Kidney (tissue), 22 donors: ENCODE measurements at regions of chr2 and their contacts with region 1.

Region 1: DNA sequence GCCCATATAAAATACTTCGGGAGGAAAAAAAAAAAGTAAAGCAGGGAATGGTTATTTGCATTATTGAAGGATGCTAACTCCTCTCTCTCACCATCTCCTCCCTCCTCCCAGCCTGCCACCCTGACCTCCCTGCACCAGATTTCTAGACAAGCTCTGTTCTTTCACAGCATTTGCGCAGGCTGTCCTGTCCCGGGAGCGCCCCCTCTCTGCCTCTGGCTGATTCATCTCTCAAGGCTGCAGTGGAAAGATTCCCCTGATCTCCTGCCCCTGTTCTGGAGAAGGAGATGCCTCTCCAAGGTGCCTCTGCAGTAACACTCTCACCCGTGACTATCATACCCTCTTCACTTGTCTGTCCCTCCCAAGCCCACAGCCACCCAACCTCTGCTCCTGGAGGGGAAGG is 38.5 kb downstream of the COL4A4 start:
- DNase-seq: no peak
- H3K4me3 ChIP-seq: no peak overlapping the region
- H3K27ac ChIP-seq: no peak overlapping the region
- H3K4me1 ChIP-seq: no peaks in the 10 kb centered on the region
- H3K27me3 ChIP-seq: peaks cover 3% of the 10 kb centered on the region
- CTCF ChIP-seq: no peak

Region 2: DNA sequence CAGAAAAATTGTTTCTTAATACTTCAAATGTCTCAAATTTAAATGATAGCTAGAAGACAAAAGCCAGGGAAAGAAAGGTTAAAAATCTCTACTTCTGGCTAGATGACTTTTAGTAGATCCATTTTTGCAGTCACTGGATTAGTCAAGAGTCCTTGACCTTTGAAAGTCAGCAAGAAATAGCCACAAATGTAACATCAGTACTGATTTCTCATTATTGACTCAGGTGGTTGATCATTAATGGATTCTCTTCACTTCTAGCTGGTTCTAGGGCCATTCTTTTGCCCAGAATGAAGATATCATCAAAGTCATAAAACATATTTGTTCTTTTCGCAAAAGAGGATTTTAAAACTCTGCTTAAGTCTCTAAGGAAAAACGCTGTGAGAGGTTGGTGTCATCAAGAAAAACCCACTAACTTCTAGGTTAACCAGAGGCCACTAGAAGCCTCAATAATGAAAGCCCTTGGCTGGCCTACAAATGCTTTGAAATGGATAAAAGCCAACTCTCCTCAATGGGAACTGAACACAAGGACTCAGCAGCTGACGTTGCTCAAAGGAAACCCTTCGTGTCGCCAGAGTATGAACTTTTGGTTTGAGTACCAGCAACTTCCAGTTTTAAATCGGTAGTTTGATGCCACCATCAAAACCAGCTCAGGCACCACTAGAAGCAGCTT is 392.2 kb before region 1 on chr2:
- intact Hi-C with region 1: no loop called
- DNase-seq: no peak
- H3K4me3 ChIP-seq: no peak overlapping the region
- H3K27ac ChIP-seq: no peak overlapping the region
- H3K4me1 ChIP-seq: peaks cover 0 to 6% (median 0%) of the 10 kb centered on the region in 3 donors
- H3K27me3 ChIP-seq: no peaks in the 10 kb centered on the region
- CTCF ChIP-seq: no peak

Region 3: GRCh38 chr2:226916669-226917068 is 208.8 kb before region 1 on chr2:
- intact Hi-C with region 1: no loop called
- DNase-seq: no peak
- H3K4me3 ChIP-seq: no peak overlapping the region
- H3K27ac ChIP-seq: no peak overlapping the region
- H3K4me1 ChIP-seq: no peaks in the 10 kb centered on the region
- H3K27me3 ChIP-seq: no peaks in the 10 kb centered on the region
- CTCF ChIP-seq: no peak

Region 4: GRCh38 chr2:226963528-226963927 is 162.0 kb before region 1 on chr2:
- intact Hi-C with region 1: no loop called
- DNase-seq: no peak
- H3K4me3 ChIP-seq: no peak overlapping the region
- H3K27ac ChIP-seq: no peak overlapping the region
- H3K4me1 ChIP-seq: no peaks in the 10 kb centered on the region
- H3K27me3 ChIP-seq: no peaks in the 10 kb centered on the region
- CTCF ChIP-seq: no peak

Region 5: GRCh38 chr2:227238238-227239237 is 113.0 kb after region 1 on chr2:
- intact Hi-C with region 1: loop called (anchors 5 kb)
- DNase-seq: peak in 4 of 5 donors; percentile 68 to 89 (median 82)
- H3K4me3 ChIP-seq: no peak overlapping the region
- H3K27ac ChIP-seq: no peak overlapping the region
- H3K4me1 ChIP-seq: peaks cover 0 to 9% (median 2%) of the 10 kb centered on the region in 3 donors
- H3K27me3 ChIP-seq: no peaks in the 10 kb centered on the region
- CTCF ChIP-seq: peak; percentile 96

Region 6: DNA sequence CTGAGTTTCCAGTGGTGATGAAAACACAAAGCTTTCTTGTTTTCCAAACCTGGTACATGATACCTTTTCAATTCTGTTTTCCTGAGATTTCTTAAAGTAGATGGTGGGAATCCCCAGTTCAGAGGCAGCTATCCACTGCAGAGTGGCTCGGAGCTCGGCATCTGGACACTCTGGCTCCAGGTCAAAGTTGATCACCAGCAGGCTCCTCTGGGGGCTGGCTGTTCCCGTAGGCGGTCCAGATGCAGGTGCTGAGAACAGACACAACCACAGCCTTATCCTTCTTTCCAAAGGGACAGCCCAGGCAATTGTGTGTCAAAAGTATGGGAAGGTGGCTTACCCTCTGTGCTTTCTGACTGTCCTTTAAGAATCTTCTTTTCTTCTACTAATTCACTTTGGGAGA is 865.4 kb after region 1 on chr2:
- intact Hi-C with region 1: no loop called
- DNase-seq: no peak
- H3K4me3 ChIP-seq: no peak overlapping the region
- H3K27ac ChIP-seq: no peak overlapping the region
- H3K4me1 ChIP-seq: no peaks in the 10 kb centered on the region
- H3K27me3 ChIP-seq: no peaks in the 10 kb centered on the region
- CTCF ChIP-seq: no peak